Gastrocnemius medialis (tissue), 4 donors: ENCODE measurements at regions of chr10 and their contacts with region 1.

Region 1: GRCh38 chr10:102503281-102504220 is at the start of gene SUFU:
- DNase-seq: peak; percentile 98
- ATAC-seq: peak; percentile 62 to 68
- H3K4me3 ChIP-seq: peak within 1 kb of the TSS; percentile 89 to 97 (median 94)
- H3K27ac ChIP-seq: peak within 1 kb of the TSS; percentile 95 to 100 (median 98)
- H3K4me1 ChIP-seq: peaks cover 68 to 72% of the 10 kb centered on the region in 2 donors
- H3K27me3 ChIP-seq: no peaks in the 10 kb centered on the region
- CTCF ChIP-seq: peak; percentile 78 to 94 (median 92)
- POLR2A ChIP-seq: peak; percentile 73 to 79
- total RNA-seq, gene SUFU: 7.3 to 11.8 (median 7.9) TPM

Region 2: GRCh38 chr10:102132563-102133372 is 370.8 kb before region 1 on chr10 and contains the start of gene PPRC1:
- in situ Hi-C with region 1: no loop called
- intact Hi-C with region 1: loop called (anchors 5 kb)
- DNase-seq: peak; percentile 98 to 99
- ATAC-seq: peak; percentile 97
- H3K4me3 ChIP-seq: peak within 1 kb of the TSS; percentile 90 to 98 (median 94)
- H3K27ac ChIP-seq: peak within 1 kb of the TSS; percentile 97 to 100 (median 99)
- H3K4me1 ChIP-seq: peaks cover 28 to 31% of the 10 kb centered on the region in 2 donors
- H3K27me3 ChIP-seq: no peaks in the 10 kb centered on the region
- CTCF ChIP-seq: peak; percentile 73 to 95 (median 90)
- POLR2A ChIP-seq: peak; percentile 91 to 93
- total RNA-seq, gene PPRC1: 13.3 to 26.5 (median 17.1) TPM

Region 3: GRCh38 chr10:102394079-102394800 is 109.3 kb before region 1 on chr10:
- in situ Hi-C with region 1: no loop called
- intact Hi-C with region 1: loop called (anchors 1 kb)
- DNase-seq: peak; percentile 89 to 90
- ATAC-seq: peak; percentile 84 to 87
- H3K4me3 ChIP-seq: peak overlapping the region; percentile 68 to 79 (median 75)
- H3K27ac ChIP-seq: peak overlapping the region; percentile 90 to 92 (median 92)
- H3K4me1 ChIP-seq: peaks cover 21 to 22% of the 10 kb centered on the region in 2 donors
- H3K27me3 ChIP-seq: no peaks in the 10 kb centered on the region
- CTCF ChIP-seq: peak in 4 of 5 experiments; percentile 58 to 98 (median 97)
- POLR2A ChIP-seq: peak; percentile 88 to 91

Region 4: DNA sequence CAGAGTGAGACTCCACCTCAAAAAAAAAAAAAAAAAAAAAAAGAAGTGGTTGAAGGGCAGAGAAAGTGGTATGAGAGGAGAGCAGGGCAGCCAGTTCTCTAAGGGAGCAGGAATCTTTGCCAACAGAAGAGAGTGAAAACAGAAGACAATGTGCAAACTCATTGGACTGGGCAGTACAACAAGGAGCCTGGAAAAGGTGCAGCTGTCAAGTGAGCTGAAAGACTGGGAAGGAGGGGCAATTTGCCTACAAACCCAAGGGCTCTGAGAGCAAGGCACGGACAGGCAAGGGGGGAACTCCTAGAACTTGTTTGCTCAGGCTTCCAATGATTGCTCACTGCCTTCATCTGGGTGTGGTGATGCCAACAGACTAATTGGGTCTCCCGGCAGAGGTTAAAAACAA is 10.6 kb before region 1 on chr10:
- in situ Hi-C with region 1: no loop called
- intact Hi-C with region 1: loop called (anchors 1 kb)
- DNase-seq: peak; percentile 83 to 90
- ATAC-seq: peak; percentile 88 to 95
- H3K4me3 ChIP-seq: peak overlapping the region in 1 of 4 donors; percentile 18
- H3K27ac ChIP-seq: peak overlapping the region; percentile 83 to 100 (median 91)
- H3K4me1 ChIP-seq: peaks cover 76 to 78% of the 10 kb centered on the region in 2 donors
- H3K27me3 ChIP-seq: no peaks in the 10 kb centered on the region
- CTCF ChIP-seq: no peak
- POLR2A ChIP-seq: peak; percentile 15 to 31

Region 5: GRCh38 chr10:102641880-102642735 is 138.6 kb after region 1 on chr10:
- in situ Hi-C with region 1: no loop called
- intact Hi-C with region 1: loop called (anchors 1 kb)
- DNase-seq: peak; percentile 99
- ATAC-seq: peak; percentile 50 to 55
- H3K4me3 ChIP-seq: peak overlapping the region; percentile 62 to 90 (median 80)
- H3K27ac ChIP-seq: peak overlapping the region; percentile 99 to 100 (median 100)
- H3K4me1 ChIP-seq: peaks cover 12 to 15% of the 10 kb centered on the region in 2 donors
- H3K27me3 ChIP-seq: no peaks in the 10 kb centered on the region
- CTCF ChIP-seq: no peak
- POLR2A ChIP-seq: peak; percentile 96 to 98

Region 6: GRCh38 chr10:102917962-102918816 is 414.6 kb after region 1 on chr10 and contains the start of gene CNNM2:
- in situ Hi-C with region 1: no loop called
- intact Hi-C with region 1: loop called (anchors 1 kb)
- DNase-seq: peak; percentile 100
- ATAC-seq: peak; percentile 88 to 90
- H3K4me3 ChIP-seq: peak within 1 kb of the TSS; percentile 80 to 95 (median 92)
- H3K27ac ChIP-seq: peak within 1 kb of the TSS; percentile 96 to 98 (median 96)
- H3K4me1 ChIP-seq: peaks cover 30 to 32% of the 10 kb centered on the region in 2 donors
- H3K27me3 ChIP-seq: no peaks in the 10 kb centered on the region
- CTCF ChIP-seq: no peak
- POLR2A ChIP-seq: peak; percentile 57 to 65
- total RNA-seq, gene CNNM2: 1.1 to 3.2 (median 2.0) TPM